ENCODE measurements at regions of chr12 and their contacts with region 1.

Region 1: GRCh38 chr12:111396726-111397445 is 8.8 kb upstream of the SH2B3 start:
- DNase-seq: peak; percentile 88
- ATAC-seq: peak; percentile 91
- H3K4me3 Mint-ChIP-seq: peak overlapping the region; percentile 57
- H3K27ac Mint-ChIP-seq: peak overlapping the region; percentile 72
- H3K4me1 Mint-ChIP-seq: peaks cover 28% of the 10 kb centered on the region
- H3K27me3 Mint-ChIP-seq: peaks cover 30% of the 10 kb centered on the region

Region 2: GRCh38 chr12:111287125-111287900 is 109.6 kb before region 1 on chr12:
- CTCF ChIA-PET with region 1: no interaction called
- DNase-seq: no peak
- ATAC-seq: no peak
- H3K4me3 Mint-ChIP-seq: no peak overlapping the region
- H3K27ac Mint-ChIP-seq: no peak overlapping the region
- H3K4me1 Mint-ChIP-seq: no peaks in the 10 kb centered on the region
- H3K27me3 Mint-ChIP-seq: no peaks in the 10 kb centered on the region

Region 3: DNA sequence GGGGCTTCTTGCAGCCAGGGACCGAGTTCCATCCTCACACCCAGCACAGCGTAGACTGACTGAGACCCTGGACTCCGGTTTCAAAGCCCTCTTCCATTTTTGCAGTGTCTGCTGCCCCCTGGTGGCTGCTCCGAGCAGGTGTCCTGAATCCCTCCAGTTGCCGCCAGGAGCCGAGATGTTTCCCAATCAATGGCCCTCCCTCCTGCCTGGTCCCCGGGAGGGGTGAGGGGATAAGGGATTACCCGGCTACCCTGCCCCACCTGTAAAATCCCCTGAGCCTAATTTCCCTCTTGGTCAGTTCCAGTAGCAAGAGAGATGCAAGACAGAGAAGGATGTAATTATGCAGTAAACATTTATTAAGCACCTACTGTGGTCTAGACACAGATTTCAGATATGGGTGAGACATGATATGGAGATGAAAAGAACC is 83.0 kb before region 1 on chr12:
- CTCF ChIA-PET with region 1: no interaction called
- DNase-seq: peak; percentile 70
- ATAC-seq: peak; percentile 73
- H3K4me3 Mint-ChIP-seq: no peak overlapping the region
- H3K27ac Mint-ChIP-seq: no peak overlapping the region
- H3K4me1 Mint-ChIP-seq: no peaks in the 10 kb centered on the region
- H3K27me3 Mint-ChIP-seq: peaks cover 12% of the 10 kb centered on the region

Region 4: DNA sequence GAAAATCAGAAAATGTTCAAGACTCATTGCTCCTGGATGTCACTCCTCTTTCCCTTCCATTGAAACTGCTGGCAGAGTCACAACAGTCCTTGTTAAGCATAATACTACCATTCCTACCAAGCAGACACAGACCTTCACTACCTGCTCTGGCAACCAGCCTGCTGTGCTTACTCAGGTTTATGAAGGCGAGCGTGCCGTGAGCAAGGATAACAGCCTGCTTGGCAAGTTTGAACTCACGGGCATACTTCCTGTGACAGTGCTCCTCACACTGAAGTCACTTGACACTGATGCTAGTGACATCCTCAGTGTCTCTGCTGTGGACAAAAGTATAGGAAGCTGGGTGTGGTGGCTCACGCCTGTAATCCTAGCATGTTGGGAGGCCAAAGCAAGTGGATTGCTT is 12.3 kb before region 1 on chr12:
- CTCF ChIA-PET with region 1: interaction called, 10 read pairs
- DNase-seq: no peak
- ATAC-seq: no peak
- H3K4me3 Mint-ChIP-seq: no peak overlapping the region
- H3K27ac Mint-ChIP-seq: no peak overlapping the region
- H3K4me1 Mint-ChIP-seq: no peaks in the 10 kb centered on the region
- H3K27me3 Mint-ChIP-seq: peaks cover 7% of the 10 kb centered on the region

Region 5: GRCh38 chr12:111434680-111435338 is 37.9 kb after region 1 on chr12:
- CTCF ChIA-PET with region 1: interaction called, 950 read pairs
- DNase-seq: peak; percentile 91
- ATAC-seq: peak; percentile 68
- H3K4me3 Mint-ChIP-seq: peak overlapping the region; percentile 63
- H3K27ac Mint-ChIP-seq: peak overlapping the region; percentile 95
- H3K4me1 Mint-ChIP-seq: peaks cover 89% of the 10 kb centered on the region
- H3K27me3 Mint-ChIP-seq: no peaks in the 10 kb centered on the region

Region 6: GRCh38 chr12:111482462-111482861 is 85.6 kb after region 1 on chr12:
- CTCF ChIA-PET with region 1: interaction called, 36 read pairs
- DNase-seq: no peak
- ATAC-seq: no peak
- H3K4me3 Mint-ChIP-seq: no peak overlapping the region
- H3K27ac Mint-ChIP-seq: no peak overlapping the region
- H3K4me1 Mint-ChIP-seq: no peaks in the 10 kb centered on the region
- H3K27me3 Mint-ChIP-seq: no peaks in the 10 kb centered on the region

Region 7: DNA sequence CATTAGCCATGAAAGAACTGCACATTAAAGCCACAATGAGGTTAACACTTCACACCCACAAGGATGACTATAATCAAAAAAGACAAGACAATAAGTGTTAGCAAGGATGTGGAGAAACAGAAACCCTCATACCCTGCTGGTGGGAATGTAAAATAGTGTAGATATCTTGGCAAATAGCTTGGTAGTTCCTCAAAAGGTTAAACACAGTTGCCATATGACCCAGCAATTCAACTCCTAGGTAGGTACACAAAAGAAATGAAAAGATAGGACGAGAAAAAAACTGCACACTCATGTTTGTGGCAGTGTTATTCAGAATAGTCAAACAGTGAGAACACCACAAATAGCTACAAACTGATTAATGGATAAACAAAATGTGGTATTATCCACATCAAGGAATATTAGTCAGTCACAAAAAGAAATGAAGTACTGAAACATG is 108.7 kb after region 1 on chr12:
- CTCF ChIA-PET with region 1: interaction called, 15 read pairs
- DNase-seq: peak; percentile 42
- ATAC-seq: peak; percentile 89
- H3K4me3 Mint-ChIP-seq: no peak overlapping the region
- H3K27ac Mint-ChIP-seq: peak overlapping the region; percentile 61
- H3K4me1 Mint-ChIP-seq: peaks cover 16% of the 10 kb centered on the region
- H3K27me3 Mint-ChIP-seq: no peaks in the 10 kb centered on the region

Region 8: DNA sequence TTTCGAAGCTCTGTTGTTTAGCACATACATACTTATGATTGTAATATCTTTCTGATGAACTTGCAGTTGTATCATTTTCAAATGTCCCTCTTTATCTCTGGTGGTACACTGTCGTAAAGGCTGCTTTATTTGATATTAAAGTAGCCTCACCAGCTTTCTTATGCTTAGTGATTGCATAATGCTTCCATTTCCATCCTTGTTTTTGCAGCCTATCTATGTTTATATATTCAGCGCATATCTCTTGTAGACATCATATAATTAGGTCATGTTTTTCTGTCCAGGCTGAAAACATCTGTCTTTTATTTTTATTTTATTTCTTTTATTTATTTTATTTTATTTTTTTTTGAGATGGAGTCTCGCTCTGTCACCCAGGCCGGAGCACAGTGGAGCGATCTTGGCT is 323.6 kb after region 1 on chr12:
- CTCF ChIA-PET with region 1: no interaction called
- DNase-seq: no peak
- ATAC-seq: no peak
- H3K4me3 Mint-ChIP-seq: no peak overlapping the region
- H3K27ac Mint-ChIP-seq: no peak overlapping the region
- H3K4me1 Mint-ChIP-seq: no peaks in the 10 kb centered on the region
- H3K27me3 Mint-ChIP-seq: no peaks in the 10 kb centered on the region

Region 9: DNA sequence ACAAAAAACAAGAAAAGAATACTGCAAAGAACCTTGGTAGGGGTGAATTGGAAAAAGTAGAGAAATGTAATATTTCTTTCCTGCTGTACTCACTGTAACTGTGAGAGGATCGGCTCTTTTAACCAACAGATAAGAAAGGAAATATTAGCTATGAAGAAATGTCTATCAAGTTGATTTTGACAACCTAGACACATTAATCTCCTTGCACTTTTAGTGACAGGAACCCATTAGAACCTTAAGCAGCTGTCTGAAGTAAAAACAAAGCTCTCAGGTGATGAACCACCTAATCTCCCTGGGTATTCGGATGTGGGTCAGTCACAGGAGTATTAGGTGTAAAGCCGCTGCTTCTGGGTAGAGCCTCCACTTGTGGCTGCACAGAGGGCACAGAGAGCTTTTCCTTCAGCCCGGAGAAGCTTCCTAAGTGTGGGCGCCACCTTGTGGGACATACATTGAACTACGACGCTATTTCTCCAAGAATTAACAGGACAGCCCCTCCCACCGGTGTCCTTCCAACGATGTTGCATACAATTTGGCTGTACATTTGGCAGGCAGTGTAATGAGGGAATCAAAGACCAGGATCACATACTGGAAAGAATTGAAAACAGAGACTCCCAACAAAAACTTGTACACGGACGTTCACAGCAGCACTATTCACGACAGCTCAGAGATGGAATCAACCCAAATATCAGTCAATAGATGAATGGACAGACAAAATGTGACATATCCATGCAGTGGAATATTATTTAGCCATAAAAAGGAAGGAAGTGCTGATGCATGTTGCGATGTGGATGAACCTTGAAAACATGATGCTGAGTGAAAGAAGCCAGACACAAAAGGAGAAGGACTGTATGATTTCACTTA is 416.2 kb after region 1 on chr12:
- CTCF ChIA-PET with region 1: interaction called, 26 read pairs
- DNase-seq: peak; percentile 79
- ATAC-seq: peak; percentile 95
- H3K4me3 Mint-ChIP-seq: no peak overlapping the region
- H3K27ac Mint-ChIP-seq: no peak overlapping the region
- H3K4me1 Mint-ChIP-seq: peaks cover 8% of the 10 kb centered on the region
- H3K27me3 Mint-ChIP-seq: peaks cover 3% of the 10 kb centered on the region